ENCODE measurements at regions of chr18 and their contacts with region 1.

Region 1: DNA sequence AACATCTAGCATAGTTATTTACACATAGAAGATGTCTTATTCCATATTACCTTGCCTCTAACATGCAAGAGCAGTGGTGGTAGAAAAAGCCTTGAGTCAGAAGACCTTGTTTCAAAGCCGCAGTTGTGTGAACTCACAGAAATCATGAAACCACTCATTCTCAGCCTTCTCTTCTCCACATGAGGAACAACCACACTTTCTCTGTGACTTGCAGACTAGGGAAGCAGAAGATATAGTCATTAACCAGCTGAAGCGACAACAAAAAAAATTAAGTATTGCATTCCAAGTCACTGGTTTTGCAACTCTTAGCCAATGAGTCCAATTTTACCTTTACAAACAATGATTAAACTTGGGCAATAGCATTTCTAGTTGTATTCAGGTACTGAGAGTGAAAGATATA is 19.0 kb downstream of the TWSG1 start:
- DNase-seq: no peak
- ATAC-seq: no peak
- H3K4me3 ChIP-seq: no peak overlapping the region
- H3K27ac ChIP-seq: no peak overlapping the region; the same call in 1 of the 2 replicates
- H3K4me1 ChIP-seq: peaks cover 9% of the 10 kb centered on the region
- H3K27me3 ChIP-seq: no peaks in the 10 kb centered on the region
- CTCF ChIP-seq: no peak
- POLR2A ChIP-seq: no peak
- RAD21 ChIP-seq: no peak

Region 2: GRCh38 chr18:9153256-9153655 is 200.3 kb before region 1 on chr18:
- CTCF ChIA-PET with region 1: no interaction called
- POLR2A ChIA-PET with region 1: no interaction called
- dilution Hi-C with region 1: no loop called
- in situ Hi-C with region 1: no loop called
- intact Hi-C with region 1: no loop called
- DNase-seq: no peak
- ATAC-seq: no peak
- H3K4me3 ChIP-seq: no peak overlapping the region
- H3K27ac ChIP-seq: no peak overlapping the region
- H3K4me1 ChIP-seq: peaks cover 2% of the 10 kb centered on the region; the same call in 1 of the 2 replicates
- H3K27me3 ChIP-seq: no peaks in the 10 kb centered on the region
- CTCF ChIP-seq: no peak
- POLR2A ChIP-seq: no peak
- RAD21 ChIP-seq: no peak

Region 3: DNA sequence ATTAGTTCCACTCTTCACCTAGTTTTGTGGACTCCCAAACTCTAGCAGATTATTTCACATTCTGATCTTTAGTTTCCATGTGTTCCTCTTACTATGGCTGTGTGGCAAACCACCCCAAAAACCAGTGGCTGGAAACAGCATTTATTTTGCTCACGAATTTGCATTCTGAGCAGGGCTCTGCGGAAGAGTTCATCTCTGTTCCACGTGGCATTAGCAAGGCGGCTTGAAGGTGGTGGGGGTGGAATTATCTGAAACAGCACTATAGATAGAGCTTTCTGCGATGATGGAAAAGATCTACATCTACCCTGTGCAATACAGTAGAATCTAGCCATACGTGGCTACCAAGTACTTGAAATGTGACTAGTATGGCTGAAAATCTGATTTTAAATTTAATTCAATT is 13.1 kb before region 1 on chr18:
- CTCF ChIA-PET with region 1: no interaction called
- POLR2A ChIA-PET with region 1: interaction called, 12 read pairs
- dilution Hi-C with region 1: no loop called
- in situ Hi-C with region 1: no loop called
- intact Hi-C with region 1: no loop called
- DNase-seq: no peak
- ATAC-seq: no peak
- H3K4me3 ChIP-seq: no peak overlapping the region
- H3K27ac ChIP-seq: no peak overlapping the region
- H3K4me1 ChIP-seq: peaks cover 7% of the 10 kb centered on the region
- H3K27me3 ChIP-seq: no peaks in the 10 kb centered on the region
- CTCF ChIP-seq: no peak
- POLR2A ChIP-seq: no peak
- RAD21 ChIP-seq: no peak